ENCODE measurements at regions of chr3 and their contacts with region 1.

Region 1: DNA sequence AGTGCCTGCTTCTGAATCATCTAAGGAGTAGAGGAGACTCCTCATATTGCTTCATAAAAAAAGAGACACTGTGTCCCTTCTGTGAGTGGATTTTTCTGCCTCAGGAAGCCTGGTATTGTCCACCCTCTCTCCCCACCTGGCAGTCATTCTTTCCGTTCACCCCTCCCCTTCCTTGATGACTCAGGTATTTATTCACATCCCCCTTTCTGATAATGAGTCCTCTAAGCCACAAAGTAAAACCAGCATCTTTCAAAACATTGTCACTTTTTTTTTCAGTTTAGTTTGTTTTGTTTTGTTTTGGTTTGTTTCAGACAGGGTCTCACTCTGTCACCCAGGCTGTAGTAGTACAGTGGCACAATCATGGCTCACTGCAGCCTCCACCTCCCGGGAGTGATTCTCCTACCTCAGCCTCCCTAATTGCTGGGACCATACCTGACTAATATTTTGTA is 65.2 kb upstream of the UBE2E1 start:
- DNase-seq: peak; percentile 78
- ATAC-seq: peak; percentile 88
- H3K4me3 Mint-ChIP-seq: no peak overlapping the region
- H3K27ac Mint-ChIP-seq: no peak overlapping the region
- H3K4me1 Mint-ChIP-seq: peaks cover 9% of the 10 kb centered on the region
- H3K27me3 Mint-ChIP-seq: peaks cover 14% of the 10 kb centered on the region

Region 2: DNA sequence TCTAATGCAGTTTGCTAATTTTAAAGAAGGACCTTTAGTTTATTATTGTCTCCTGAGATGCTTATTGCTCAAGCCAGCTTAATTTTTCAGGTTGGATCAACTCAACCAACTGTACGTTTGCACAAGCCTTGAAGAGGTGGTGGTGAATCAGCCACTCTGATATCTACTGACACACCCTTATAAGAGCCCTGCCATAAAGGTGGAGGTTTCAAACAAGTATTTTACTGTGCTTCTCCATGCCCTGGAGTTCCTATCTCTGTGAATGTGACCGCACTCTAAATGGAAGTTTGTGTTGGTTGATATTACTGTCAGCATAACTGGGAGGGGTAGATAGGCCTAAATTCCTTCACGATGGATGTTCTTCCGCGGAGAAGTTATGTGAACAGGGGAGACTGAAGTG is 232.1 kb before region 1 on chr3:
- CTCF ChIA-PET with region 1: no interaction called
- POLR2A ChIA-PET with region 1: no interaction called
- intact Hi-C with region 1: no loop called
- DNase-seq: no peak
- ATAC-seq: no peak
- H3K4me3 Mint-ChIP-seq: no peak overlapping the region
- H3K27ac Mint-ChIP-seq: no peak overlapping the region
- H3K4me1 Mint-ChIP-seq: no peaks in the 10 kb centered on the region
- H3K27me3 Mint-ChIP-seq: no peaks in the 10 kb centered on the region

Region 3: GRCh38 chr3:23726811-23727548 is 13.6 kb before region 1 on chr3:
- CTCF ChIA-PET with region 1: no interaction called
- POLR2A ChIA-PET with region 1: no interaction called
- intact Hi-C with region 1: loop called (anchors 1 to 2 kb)
- DNase-seq: peak; percentile 18
- ATAC-seq: peak; percentile 92
- H3K4me3 Mint-ChIP-seq: no peak overlapping the region
- H3K27ac Mint-ChIP-seq: no peak overlapping the region
- H3K4me1 Mint-ChIP-seq: peaks cover 8% of the 10 kb centered on the region
- H3K27me3 Mint-ChIP-seq: no peaks in the 10 kb centered on the region

Region 4: GRCh38 chr3:23762214-23762613 is 21.7 kb after region 1 on chr3:
- CTCF ChIA-PET with region 1: interaction called, 7 read pairs
- POLR2A ChIA-PET with region 1: no interaction called
- intact Hi-C with region 1: loop called in 1 of 2 experiments (anchors 1 kb)
- DNase-seq: no peak
- ATAC-seq: peak; percentile 62
- H3K4me3 Mint-ChIP-seq: no peak overlapping the region
- H3K27ac Mint-ChIP-seq: no peak overlapping the region
- H3K4me1 Mint-ChIP-seq: peaks cover 28% of the 10 kb centered on the region
- H3K27me3 Mint-ChIP-seq: no peaks in the 10 kb centered on the region

Region 5: GRCh38 chr3:23797491-23797890 is 57.0 kb after region 1 on chr3:
- CTCF ChIA-PET with region 1: no interaction called
- POLR2A ChIA-PET with region 1: no interaction called
- intact Hi-C with region 1: loop called in 1 of 2 experiments (anchors 5 kb)
- DNase-seq: peak; percentile 22
- ATAC-seq: peak; percentile 68
- H3K4me3 Mint-ChIP-seq: no peak overlapping the region
- H3K27ac Mint-ChIP-seq: no peak overlapping the region
- H3K4me1 Mint-ChIP-seq: peaks cover 18% of the 10 kb centered on the region
- H3K27me3 Mint-ChIP-seq: peaks cover 6% of the 10 kb centered on the region